HCT116 (cell line): ENCODE measurements at regions of chr6 and their contacts with region 1.

Region 1: DNA sequence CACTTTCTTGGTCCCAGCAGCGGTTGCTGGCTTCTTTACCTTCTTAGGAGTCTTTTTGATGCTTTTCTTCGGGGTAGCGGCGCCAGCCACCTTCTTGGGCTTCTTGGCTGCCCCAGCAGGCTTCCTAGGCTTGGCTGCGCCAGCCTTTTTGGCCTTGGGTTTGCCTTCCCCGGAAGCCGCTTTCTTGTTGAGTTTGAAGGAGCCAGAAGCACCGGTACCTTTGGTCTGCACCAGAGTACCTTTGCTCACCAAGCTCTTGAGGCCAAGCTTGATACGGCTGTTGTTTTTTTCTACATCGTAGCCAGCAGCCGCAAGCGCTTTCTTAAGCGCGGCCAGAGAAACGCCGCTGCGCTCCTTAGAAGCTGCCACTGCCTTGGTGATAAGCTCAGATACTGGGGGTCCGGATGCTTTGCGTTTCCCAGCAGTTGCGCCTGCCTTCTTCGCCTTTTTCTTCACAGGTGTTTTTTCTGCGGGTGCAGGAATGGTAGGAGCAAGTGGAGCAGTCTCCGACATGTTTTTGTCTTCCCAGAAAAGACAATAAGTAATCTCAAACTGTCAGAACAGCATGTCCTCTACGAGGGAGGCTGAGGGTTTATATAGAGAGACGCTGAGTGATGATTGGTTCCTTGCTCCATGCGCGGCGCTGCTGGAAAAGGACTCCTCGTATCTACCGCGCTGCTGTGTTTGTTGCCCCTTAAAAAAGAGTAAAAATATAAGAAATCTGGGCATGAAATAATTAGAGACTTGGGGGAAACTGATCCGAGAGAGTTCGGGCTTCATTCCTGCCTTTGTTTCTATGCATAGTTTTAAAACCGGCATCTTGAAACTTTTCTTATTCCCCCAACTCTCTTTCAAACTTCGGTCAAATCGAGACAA is 130.3 kb upstream of the BTN3A2 start:
- DNase-seq: no peak
- ATAC-seq: no peak
- H3K4me3 ChIP-seq: no peak overlapping the region
- H3K27ac ChIP-seq: no peak overlapping the region
- H3K4me1 ChIP-seq: no peaks in the 10 kb centered on the region
- H3K27me3 ChIP-seq: no peaks in the 10 kb centered on the region
- CTCF ChIP-seq: no peak
- POLR2A ChIP-seq: no peak
- RAD21 ChIP-seq: no peak

Region 2: DNA sequence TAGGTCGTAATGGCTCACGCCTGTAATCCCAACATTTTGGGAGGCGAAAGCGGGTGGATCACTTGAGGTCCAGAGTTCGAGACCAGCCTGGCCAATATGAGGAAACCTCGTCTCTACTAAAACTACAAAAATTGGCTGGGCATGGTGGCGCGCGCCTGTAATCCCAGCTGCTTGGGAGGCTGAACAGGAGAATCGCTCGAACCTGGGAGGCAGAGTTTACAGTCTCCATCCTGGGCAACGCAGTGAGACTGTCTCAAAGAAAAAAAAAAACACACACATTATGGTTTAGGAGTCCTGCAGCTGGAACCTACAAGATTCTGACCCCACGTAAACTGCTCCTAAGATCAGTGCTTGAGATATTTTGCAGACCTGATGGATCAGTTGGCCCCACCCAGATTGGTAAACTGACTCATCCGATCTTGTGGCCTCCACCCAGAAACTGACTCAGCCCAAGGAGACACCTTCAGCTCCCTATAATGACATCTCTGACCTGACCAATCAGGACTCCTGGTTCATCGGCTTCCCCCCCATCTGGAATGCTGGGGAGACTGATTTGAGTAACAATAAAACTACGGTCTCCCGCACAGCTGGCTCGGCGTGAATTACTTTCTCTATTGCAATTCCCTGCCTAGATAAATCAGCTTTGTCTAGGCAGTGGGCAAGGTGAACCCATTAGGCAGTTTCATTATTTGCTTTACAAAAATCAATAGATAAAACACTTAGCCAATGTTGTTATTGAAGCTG is 34.2 kb after region 1 on chr6:
- CTCF ChIA-PET with region 1: no interaction called
- POLR2A ChIA-PET with region 1: no interaction called
- RAD21 ChIA-PET with region 1: no interaction called
- intact Hi-C with region 1: loop called (anchors 5 kb)
- DNase-seq: no peak
- ATAC-seq: no peak
- H3K4me3 ChIP-seq: no peak overlapping the region
- H3K27ac ChIP-seq: no peak overlapping the region
- H3K4me1 ChIP-seq: peaks cover 0 to 9% of the 10 kb centered on the region in 2 experiments; a peak in 2 of 4 replicates
- H3K27me3 ChIP-seq: no peaks in the 10 kb centered on the region
- CTCF ChIP-seq: no peak
- POLR2A ChIP-seq: no peak
- RAD21 ChIP-seq: no peak

Region 3: DNA sequence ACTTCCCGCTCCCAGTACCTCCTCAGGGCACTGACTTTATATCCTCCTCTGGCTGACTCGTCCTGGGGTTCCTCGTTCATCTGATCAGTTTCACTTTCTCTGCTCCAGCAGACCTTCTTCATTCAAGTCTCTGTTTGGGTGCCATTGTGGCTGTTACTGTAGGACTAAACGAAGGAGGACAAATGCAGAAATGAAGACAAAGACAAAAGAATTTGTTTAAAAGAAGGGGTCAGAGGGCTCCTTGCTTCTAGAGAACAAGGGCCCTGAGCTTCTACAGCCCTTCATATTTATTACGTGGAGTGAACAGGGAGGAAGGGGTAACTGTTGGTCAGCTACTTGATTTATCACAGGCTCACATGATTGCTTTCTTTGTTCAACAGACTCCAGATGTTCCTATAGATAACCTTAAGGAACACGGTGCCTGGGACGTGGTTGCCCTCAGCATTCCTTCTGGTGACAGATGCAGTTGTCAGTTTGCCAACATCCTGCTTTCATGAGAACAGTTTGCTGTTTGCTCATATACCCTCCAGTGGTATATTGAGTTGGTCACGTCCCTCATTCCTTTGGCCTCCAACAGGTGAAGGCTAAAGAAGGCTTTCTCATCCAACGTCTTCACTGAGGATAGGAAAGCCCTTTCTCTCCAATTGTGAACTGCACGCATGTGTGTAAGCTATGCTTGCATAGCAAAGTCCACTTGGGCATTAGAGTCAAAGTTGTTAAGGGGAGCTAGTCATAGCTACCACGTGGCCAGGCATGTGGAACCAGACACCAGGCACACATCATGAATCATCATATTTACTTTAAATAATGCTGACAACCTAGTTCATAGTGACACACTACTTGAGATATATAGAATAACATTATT is 61.3 kb after region 1 on chr6:
- CTCF ChIA-PET with region 1: no interaction called
- POLR2A ChIA-PET with region 1: no interaction called
- RAD21 ChIA-PET with region 1: no interaction called
- intact Hi-C with region 1: no loop called
- DNase-seq: peak; percentile 61
- ATAC-seq: peak; percentile 63
- H3K4me3 ChIP-seq: no peak overlapping the region
- H3K27ac ChIP-seq: no peak overlapping the region
- H3K4me1 ChIP-seq: peaks cover 5 to 26% of the 10 kb centered on the region in 2 experiments; a peak in 3 of 4 replicates
- H3K27me3 ChIP-seq: no peaks in the 10 kb centered on the region
- CTCF ChIP-seq: no peak
- POLR2A ChIP-seq: no peak
- RAD21 ChIP-seq: no peak